Tibial artery (tissue), 4 donors: ENCODE measurements at regions of chr16 and their contacts with region 1.

Region 1: DNA sequence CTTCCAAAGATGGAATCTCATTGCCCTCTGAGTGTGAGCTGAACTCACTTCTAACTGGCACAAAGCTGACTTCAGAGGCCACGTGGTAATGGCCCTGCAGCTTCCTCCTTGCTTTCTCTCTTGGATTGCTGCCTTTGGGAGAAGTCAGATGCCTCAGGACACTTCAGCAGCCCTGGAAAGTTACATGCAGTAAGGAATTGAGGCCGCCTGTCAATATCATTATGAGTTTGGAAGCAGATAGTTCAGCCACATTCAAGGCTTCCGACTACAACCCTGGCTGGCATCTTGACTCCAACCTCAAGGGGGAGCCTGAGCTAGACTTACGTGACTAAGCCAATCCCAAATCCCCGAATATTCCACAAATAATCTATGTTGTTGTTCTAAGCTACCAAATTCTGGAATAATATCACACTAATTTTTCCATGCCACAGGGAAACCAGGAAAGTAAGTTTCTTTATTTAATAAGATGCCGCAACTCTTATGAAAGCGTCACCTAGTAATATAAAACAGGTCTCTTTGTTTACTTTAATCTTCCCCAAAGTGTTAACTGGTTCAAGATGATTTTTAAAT is 13.6 kb downstream of the CEP20 start:
- DNase-seq: peak; percentile 55 to 66
- H3K4me3 ChIP-seq: no peak overlapping the region
- H3K27ac ChIP-seq: peak overlapping the region; percentile 35 to 38
- H3K4me1 ChIP-seq: peaks cover 0 to 22% (median 6%) of the 10 kb centered on the region in 4 donors
- H3K27me3 ChIP-seq: no peaks in the 10 kb centered on the region
- CTCF ChIP-seq: peak; percentile 70 to 78

Region 2: GRCh38 chr16:16120382-16121184 is 245.8 kb after region 1 on chr16:
- intact Hi-C with region 1: loop called (anchors 5 kb)
- DNase-seq: no peak
- H3K4me3 ChIP-seq: no peak overlapping the region
- H3K27ac ChIP-seq: no peak overlapping the region
- H3K4me1 ChIP-seq: peaks cover 0 to 4% (median 0%) of the 10 kb centered on the region in 4 donors
- H3K27me3 ChIP-seq: no peaks in the 10 kb centered on the region
- CTCF ChIP-seq: no peak